Heart left ventricle (tissue), 16 donors: ENCODE measurements at regions of chr12 and their contacts with region 1.

Region 1: DNA sequence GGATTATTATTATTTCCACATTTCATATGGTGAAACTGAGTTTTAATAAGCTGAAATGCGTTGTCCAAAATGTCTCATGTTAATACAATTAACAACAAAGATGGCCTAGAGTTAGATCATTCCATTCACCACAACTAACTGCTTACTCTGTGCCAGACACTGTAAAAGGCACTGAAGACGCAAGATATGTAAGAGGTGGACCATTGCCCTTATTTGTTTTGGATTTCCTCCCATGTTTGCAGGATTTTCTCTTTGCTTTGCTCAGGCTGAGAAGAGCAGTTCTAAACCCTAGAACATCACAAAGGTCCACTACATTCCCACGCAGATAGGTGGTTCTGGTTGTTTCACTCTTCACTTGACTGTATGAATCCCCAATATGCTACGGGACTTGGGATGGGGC is 324.4 kb upstream of the KITLG start:
- DNase-seq: no peak
- ATAC-seq: no peak
- H3K4me3 ChIP-seq: no peak overlapping the region
- H3K27ac ChIP-seq: no peak overlapping the region
- H3K4me1 ChIP-seq: peaks cover 0 to 3% (median 0%) of the 10 kb centered on the region in 12 donors
- H3K27me3 ChIP-seq: no peaks in the 10 kb centered on the region
- CTCF ChIP-seq: no peak
- POLR2A ChIP-seq: no peak

Region 2: GRCh38 chr12:88067301-88067700 is 837.4 kb before region 1 on chr12:
- intact Hi-C with region 1: loop called in 1 of 10 experiments (anchors 5 kb)
- DNase-seq: no peak
- ATAC-seq: no peak
- H3K4me3 ChIP-seq: no peak overlapping the region
- H3K27ac ChIP-seq: no peak overlapping the region
- H3K4me1 ChIP-seq: no peaks in the 10 kb centered on the region
- H3K27me3 ChIP-seq: no peaks in the 10 kb centered on the region
- CTCF ChIP-seq: no peak
- POLR2A ChIP-seq: no peak

Region 3: GRCh38 chr12:88952562-88952942 is 47.8 kb after region 1 on chr12:
- intact Hi-C with region 1: loop called in 2 of 10 experiments (anchors 5 to 10 kb)
- DNase-seq: no peak
- ATAC-seq: no peak
- H3K4me3 ChIP-seq: no peak overlapping the region
- H3K27ac ChIP-seq: no peak overlapping the region
- H3K4me1 ChIP-seq: peaks cover 0 to 6% (median 0%) of the 10 kb centered on the region in 12 donors
- H3K27me3 ChIP-seq: no peaks in the 10 kb centered on the region
- CTCF ChIP-seq: no peak
- POLR2A ChIP-seq: no peak